ENCODE measurements at regions of chr11 and their contacts with region 1.

Region 1: DNA sequence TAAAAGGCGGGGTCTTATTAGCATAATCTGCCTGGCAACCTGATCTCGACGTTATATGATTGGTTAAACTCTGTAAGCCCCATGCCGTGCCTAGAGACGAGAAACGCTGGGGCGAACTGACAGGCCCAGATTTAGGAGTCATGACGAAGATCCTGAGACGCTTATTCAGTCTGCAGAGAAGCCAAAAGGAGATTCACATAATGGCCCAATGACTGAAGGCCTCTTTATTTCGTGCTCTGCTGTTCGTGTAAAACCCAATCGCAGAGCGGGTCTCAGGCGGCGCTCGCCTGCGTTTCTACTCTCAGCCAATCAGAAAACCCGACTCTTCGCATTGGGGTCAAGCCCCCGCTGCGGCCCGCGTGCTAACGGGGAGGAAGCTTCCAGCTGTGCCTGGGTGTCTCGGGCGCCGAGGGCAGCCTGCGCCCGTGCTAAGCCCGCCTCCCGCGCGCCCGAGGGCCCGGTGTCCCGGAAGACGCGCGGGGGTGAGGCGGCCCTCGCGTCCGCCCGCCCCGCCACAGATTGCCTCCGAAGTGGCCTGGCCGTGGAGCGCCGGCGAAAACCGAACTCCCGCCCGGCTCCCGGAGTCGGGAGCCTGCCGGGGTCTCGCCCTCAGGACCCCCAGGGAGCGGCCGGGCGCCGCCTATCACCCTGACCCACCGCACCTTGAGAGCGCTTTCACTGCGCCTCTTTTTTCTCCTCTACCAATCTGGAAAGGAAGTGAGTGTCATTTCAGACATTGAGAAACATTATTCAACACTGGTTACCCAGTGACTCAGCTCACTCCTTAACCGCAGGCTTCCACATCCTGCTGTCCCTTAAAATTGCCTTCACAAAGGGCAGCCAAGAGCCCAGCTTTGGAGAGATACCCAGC is 446 bp upstream of the PRDM10 start:
- DNase-seq: peak; percentile 94 to 97 (median 96)
- ATAC-seq: peak; percentile 78 to 87 (median 80)
- H3K4me3 ChIP-seq: peak overlapping the region; percentile 58 to 76 (median 66)
- H3K27ac ChIP-seq: peak overlapping the region; percentile 98 to 100 (median 100)
- H3K4me1 ChIP-seq: peaks cover 0 to 27% (median 10%) of the 10 kb centered on the region in 4 donors
- H3K27me3 ChIP-seq: no peaks in the 10 kb centered on the region
- CTCF ChIP-seq: no peak
- POLR2A ChIP-seq: peak; percentile 94

Region 2: GRCh38 chr11:130069684-130070108 is 66.6 kb after region 1 on chr11 and contains the start of gene APLP2:
- intact Hi-C with region 1: loop called in 1 of 2 experiments (anchors 10 kb)
- DNase-seq: peak; percentile 99 to 100 (median 100)
- ATAC-seq: peak; percentile 86 to 93 (median 88)
- H3K4me3 ChIP-seq: peak within 1 kb of the TSS; percentile 69 to 89 (median 82)
- H3K27ac ChIP-seq: peak within 1 kb of the TSS; percentile 83 to 95 (median 92)
- H3K4me1 ChIP-seq: peaks cover 0 to 35% (median 0%) of the 10 kb centered on the region in 4 donors
- H3K27me3 ChIP-seq: no peaks in the 10 kb centered on the region
- CTCF ChIP-seq: no peak
- POLR2A ChIP-seq: peak; percentile 96
- total RNA-seq, gene APLP2: 184 to 255 (median 252) TPM

Region 3: GRCh38 chr11:130087294-130087926 is 84.3 kb after region 1 on chr11:
- intact Hi-C with region 1: no loop called
- DNase-seq: no peak
- ATAC-seq: peak; percentile 74 to 85 (median 84)
- H3K4me3 ChIP-seq: no peak overlapping the region
- H3K27ac ChIP-seq: no peak overlapping the region
- H3K4me1 ChIP-seq: peaks cover 0 to 34% (median 11%) of the 10 kb centered on the region in 4 donors
- H3K27me3 ChIP-seq: no peaks in the 10 kb centered on the region
- CTCF ChIP-seq: no peak
- POLR2A ChIP-seq: no peak

Measured in right lobe of liver (tissue), 6 donors.